ENCODE measurements at regions of chr5 and their contacts with region 1.

Region 1: GRCh38 chr5:9207817-9208418 is 338.0 kb downstream of the SEMA5A start:
- DNase-seq: peak; percentile 63
- H3K4me3 Mint-ChIP-seq: no peak overlapping the region
- H3K27ac Mint-ChIP-seq: peak overlapping the region; percentile 82
- H3K4me1 Mint-ChIP-seq: peaks cover 15% of the 10 kb centered on the region
- H3K27me3 Mint-ChIP-seq: no peaks in the 10 kb centered on the region
- CTCF ChIP-seq: peak; percentile 58

Region 2: DNA sequence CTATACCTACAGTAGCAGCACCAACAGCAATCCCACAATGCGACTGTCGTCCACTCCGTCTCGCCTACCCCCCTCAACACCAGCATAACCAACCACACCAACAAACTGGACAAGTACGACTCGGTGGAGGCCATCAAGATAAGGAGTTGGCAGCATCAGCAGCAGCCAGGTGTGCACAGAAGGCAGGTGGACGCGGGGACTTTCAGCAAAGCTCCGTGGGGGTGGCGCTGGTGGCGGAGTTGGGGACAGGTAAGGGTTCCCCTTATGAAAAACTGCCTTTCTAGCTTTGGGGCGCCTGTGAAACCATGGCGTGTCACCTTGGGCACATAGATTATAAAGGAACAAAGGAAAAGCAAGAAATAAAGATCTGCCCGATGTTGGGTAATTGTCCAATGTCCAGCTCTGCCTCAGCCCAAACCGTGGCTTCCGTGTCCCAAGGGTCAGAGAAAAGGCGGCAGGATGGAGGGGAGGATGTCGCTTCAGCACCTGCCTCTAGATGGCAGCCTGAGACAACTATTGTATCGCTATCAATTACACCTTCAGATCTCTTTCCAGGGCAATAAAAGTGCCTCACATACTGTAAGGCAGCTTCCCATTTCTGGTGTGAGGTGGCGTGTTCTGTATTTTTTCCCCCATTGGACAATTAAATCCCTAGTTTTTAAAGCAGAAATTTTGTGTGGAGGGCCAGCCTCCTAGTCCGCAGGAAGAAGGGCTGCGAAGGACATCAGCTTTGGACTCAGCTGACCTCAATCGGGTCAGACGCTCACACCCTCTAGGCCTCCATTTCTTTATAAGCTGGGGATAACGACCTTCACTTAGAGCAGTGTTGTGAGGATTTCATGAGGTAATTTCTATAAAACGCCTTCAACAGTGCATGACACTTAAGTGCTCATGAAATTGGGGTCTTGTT is 1280.2 kb before region 1 on chr5:
- CTCF ChIA-PET with region 1: interaction called, 9 read pairs
- POLR2A ChIA-PET with region 1: no interaction called
- intact Hi-C with region 1: loop called (anchors 5 kb)
- DNase-seq: peak; percentile 65
- H3K4me3 Mint-ChIP-seq: no peak overlapping the region
- H3K27ac Mint-ChIP-seq: no peak overlapping the region
- H3K4me1 Mint-ChIP-seq: no peaks in the 10 kb centered on the region
- H3K27me3 Mint-ChIP-seq: peaks cover 10% of the 10 kb centered on the region
- CTCF ChIP-seq: peak; percentile 63

Region 3: GRCh38 chr5:8756498-8757084 is 451.3 kb before region 1 on chr5:
- CTCF ChIA-PET with region 1: interaction called, 29 read pairs
- POLR2A ChIA-PET with region 1: no interaction called
- intact Hi-C with region 1: loop called (anchors 1 kb)
- DNase-seq: peak; percentile 55
- H3K4me3 Mint-ChIP-seq: no peak overlapping the region
- H3K27ac Mint-ChIP-seq: no peak overlapping the region
- H3K4me1 Mint-ChIP-seq: no peaks in the 10 kb centered on the region
- H3K27me3 Mint-ChIP-seq: no peaks in the 10 kb centered on the region
- CTCF ChIP-seq: peak; percentile 64

Region 4: DNA sequence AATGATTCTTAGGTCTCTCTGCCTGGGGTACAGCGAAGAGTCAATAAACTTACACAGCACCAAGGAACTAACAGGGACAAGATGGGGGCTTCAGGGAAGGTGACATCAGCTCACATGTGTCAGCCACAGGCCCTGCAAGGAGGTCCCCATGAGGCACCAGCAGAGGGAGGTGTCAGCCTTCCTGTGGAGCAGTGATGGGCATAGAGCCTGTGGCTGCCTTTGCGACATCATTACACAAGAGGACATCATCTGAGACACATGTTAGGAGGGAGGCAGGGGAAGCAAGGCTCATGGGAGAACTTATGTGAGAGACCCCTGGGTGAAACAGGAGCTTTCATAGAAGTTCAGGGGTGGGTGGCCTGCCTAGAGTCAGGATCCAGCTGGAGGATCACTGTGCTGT is 51.6 kb before region 1 on chr5:
- CTCF ChIA-PET with region 1: interaction called, 11 read pairs
- POLR2A ChIA-PET with region 1: no interaction called
- intact Hi-C with region 1: loop called (anchors 1 kb)
- DNase-seq: peak; percentile 72
- H3K4me3 Mint-ChIP-seq: no peak overlapping the region
- H3K27ac Mint-ChIP-seq: peak overlapping the region; percentile 29
- H3K4me1 Mint-ChIP-seq: peaks cover 6% of the 10 kb centered on the region
- H3K27me3 Mint-ChIP-seq: no peaks in the 10 kb centered on the region
- CTCF ChIP-seq: peak; percentile 49

Region 5: DNA sequence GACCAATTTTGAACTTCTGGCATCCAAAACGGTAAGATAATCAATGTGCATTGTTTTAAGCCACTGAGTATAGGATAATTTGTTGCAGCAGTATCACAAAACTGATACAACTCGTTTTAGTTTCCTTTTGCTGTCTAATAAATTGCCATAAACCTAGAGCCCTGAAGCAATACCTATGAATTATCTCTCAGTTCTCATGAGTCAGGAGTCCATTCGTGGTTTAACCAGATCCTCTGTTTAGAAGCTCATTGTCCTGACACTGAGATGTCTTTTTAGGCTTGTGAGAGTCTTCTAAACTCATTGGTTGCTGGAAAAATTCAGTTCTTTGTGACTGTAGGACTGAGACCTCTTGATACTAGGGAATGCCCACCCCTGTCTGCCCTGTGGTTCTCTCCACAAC is 75.1 kb after region 1 on chr5:
- CTCF ChIA-PET with region 1: no interaction called
- POLR2A ChIA-PET with region 1: no interaction called
- intact Hi-C with region 1: no loop called
- DNase-seq: no peak
- H3K4me3 Mint-ChIP-seq: no peak overlapping the region
- H3K27ac Mint-ChIP-seq: no peak overlapping the region
- H3K4me1 Mint-ChIP-seq: no peaks in the 10 kb centered on the region
- H3K27me3 Mint-ChIP-seq: no peaks in the 10 kb centered on the region
- CTCF ChIP-seq: no peak

Region 6: DNA sequence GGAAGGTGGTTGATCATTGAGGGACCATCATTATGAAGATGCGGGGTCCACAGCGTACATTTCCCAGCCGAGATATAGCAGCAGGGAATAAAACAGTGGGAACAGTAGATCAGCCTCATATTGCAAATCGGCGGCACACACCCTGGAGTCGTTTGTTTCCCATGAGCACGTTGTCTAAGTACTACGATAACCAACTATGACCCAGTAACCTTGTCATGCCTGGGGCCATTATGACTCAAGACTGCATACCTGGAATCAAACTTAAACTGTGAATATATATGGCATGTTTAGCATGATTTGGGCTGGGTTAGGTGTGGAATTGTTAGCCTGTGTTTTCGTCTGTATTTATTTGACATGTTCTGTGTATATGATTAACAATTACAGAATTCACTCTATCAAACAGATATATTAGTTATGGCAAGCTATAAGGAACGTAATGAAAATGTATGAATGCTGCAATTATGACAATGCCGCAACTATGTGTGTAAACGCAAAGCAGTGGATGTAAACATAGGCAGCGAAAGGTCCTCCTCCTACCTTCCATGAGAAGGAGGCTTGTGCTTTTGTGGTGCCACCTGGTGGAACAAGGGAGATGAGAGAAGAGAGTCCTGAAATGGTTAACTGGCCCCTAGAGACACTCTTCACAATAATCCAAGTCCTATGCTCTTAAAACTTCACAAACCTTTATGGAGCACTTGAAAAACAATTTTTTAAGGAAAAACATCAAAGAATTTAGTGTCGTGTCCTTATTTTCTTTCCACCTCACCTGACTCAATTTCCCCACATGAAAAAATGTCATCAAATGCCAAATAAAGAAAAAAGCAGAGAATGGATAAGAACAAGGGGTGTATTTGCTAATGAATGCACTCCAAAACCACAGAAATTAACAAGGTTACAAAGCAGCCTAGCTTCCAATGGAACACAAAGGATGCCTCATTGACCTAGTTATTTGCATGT is 290.9 kb after region 1 on chr5:
- CTCF ChIA-PET with region 1: interaction called, 5 read pairs
- POLR2A ChIA-PET with region 1: no interaction called
- intact Hi-C with region 1: loop called (anchors 5 kb)
- DNase-seq: peak; percentile 84
- H3K4me3 Mint-ChIP-seq: no peak overlapping the region
- H3K27ac Mint-ChIP-seq: no peak overlapping the region
- H3K4me1 Mint-ChIP-seq: no peaks in the 10 kb centered on the region
- H3K27me3 Mint-ChIP-seq: no peaks in the 10 kb centered on the region
- CTCF ChIP-seq: peak; percentile 46

Region 7: DNA sequence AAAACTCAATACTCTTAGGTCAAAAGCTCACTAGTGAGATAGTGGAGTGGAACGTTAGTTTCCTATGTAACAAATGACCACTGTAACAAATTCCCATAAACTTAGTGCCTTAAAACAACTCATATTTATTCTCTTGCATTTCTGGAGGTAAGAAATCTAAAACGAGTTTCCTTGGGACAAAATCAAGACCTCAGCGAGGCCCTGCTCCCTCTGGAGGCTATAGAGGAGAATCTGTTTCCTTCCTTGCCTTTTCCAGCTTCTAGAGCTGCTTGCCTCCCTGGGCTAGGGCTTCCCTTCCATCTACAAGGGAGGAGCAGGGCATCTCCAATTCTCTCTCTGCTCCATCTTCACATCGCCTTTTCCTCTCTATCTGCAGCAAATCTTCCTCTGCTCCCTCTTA is 305.9 kb after region 1 on chr5:
- CTCF ChIA-PET with region 1: no interaction called
- POLR2A ChIA-PET with region 1: no interaction called
- intact Hi-C with region 1: no loop called
- DNase-seq: peak; percentile 14
- H3K4me3 Mint-ChIP-seq: no peak overlapping the region
- H3K27ac Mint-ChIP-seq: no peak overlapping the region
- H3K4me1 Mint-ChIP-seq: no peaks in the 10 kb centered on the region
- H3K27me3 Mint-ChIP-seq: no peaks in the 10 kb centered on the region
- CTCF ChIP-seq: peak; percentile 5

Region 8: GRCh38 chr5:10288600-10289213 is 1080.8 kb after region 1 on chr5:
- CTCF ChIA-PET with region 1: no interaction called
- POLR2A ChIA-PET with region 1: no interaction called
- intact Hi-C with region 1: no loop called
- DNase-seq: peak; percentile 94
- H3K4me3 Mint-ChIP-seq: peak overlapping the region; percentile 46
- H3K27ac Mint-ChIP-seq: peak overlapping the region; percentile 92
- H3K4me1 Mint-ChIP-seq: peaks cover 21% of the 10 kb centered on the region
- H3K27me3 Mint-ChIP-seq: no peaks in the 10 kb centered on the region
- CTCF ChIP-seq: no peak